ENCODE measurements at regions of chr4 and their contacts with region 1.

Region 1: DNA sequence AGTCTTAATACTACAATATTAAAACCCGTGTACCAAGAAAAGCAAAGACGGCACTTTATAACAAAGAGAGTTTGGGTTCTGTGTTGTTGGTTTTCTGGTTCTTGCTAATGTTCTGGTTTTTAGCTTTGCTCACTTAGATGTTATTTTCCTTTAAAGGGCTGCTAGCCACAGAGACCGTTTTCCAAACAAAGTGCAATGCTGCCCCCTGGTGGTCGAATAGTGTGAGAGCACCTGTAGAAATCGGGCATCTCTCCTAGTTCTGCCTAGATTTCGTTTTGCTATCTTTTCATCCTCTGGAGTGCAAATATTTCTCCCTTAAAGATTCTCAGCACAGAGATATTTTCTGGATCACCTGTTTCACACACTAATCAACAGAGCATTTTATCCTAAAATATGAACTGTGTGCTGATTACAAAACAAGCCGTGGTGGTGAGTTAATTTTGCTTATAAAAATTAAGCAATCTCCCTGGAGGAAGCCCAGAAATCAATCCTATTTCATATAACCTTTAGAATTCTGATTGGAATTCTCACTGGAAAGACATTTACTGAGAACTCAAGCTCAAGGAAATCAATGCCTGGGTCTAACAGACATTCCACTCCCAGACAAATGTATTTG is 334.5 kb upstream of the NOCT start:
- DNase-seq: peak; percentile 92

Region 2: GRCh38 chr4:138035781-138036258 is 645.3 kb before region 1 on chr4:
- intact Hi-C with region 1: loop called in 1 of 2 experiments (anchors 5 kb)
- DNase-seq: peak; percentile 25

Region 3: DNA sequence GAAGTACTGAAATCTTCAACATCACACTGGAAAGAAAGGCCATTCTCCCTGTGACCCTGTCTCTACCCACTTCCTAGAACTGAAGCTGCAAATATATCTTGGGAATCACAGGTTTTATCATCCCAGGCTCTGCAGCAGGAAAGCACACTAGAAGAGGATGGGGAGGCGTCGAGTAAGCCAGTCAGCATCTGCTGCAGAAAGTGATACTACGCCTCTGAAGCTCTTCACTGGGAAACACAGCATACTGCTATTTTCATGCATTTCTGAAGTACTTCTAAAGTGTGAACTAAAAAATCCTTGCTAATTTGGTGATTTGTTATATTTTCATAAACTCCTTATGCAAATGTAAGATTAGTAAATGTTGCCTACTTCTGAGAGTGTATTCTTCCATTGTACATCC is 801.9 kb after region 1 on chr4:
- intact Hi-C with region 1: no loop called
- DNase-seq: no peak